Endothelial cell of umbilical vein (primary cell): ENCODE measurements at regions of chr17 and their contacts with region 1.

Region 1: DNA sequence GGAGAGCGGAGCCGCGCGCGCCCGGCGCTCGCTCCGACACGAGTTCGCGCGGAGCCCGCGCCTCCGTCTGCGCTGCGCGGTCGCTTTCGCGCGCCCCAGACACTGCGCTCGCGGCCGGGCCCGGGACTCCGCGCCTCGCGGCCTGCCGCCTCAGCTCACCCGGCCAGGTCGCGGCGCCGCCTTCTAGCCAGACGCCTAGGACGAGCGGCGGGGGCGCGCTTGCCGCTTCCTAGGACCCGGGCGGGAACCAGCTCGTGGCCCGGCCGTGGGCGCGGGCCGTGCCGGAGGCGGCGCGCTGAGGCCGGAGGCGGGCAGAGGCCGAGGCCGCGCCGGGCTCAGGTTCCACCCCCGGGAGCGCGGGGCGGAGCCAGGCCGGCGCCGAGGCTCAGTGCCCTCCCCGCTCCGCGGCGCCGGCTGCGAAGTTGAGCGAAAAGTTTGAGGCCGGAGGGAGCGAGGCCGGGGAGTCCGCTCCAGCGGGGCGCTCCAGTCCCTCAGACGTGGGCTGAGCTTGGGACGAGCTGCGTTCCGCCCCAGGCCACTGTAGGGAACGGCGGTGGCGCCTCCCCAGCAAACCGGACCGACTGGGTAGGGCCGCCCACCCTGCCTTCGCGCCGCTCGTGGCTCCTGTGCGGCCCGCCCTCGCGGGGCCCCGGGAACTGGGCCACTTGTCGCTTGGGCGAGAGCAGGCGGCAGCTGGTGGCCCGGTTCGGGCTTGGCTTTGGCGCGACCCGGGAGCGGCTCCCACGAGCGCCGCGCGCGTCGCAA is at the start of gene SPHK1:
- DNase-seq: peak; percentile 71
- H3K4me3 ChIP-seq: peak within 1 kb of the TSS; percentile 54 to 82 (median 65)
- H3K27ac ChIP-seq: peak within 1 kb of the TSS; percentile 97
- H3K4me1 ChIP-seq: peaks cover 26% of the 10 kb centered on the region
- H3K27me3 ChIP-seq: no peaks in the 10 kb centered on the region
- CTCF ChIP-seq: no peak
- POLR2A ChIP-seq: peak; percentile 93
- total RNA-seq, gene SPHK1: 70.7 and 85.6 TPM in 2 replicates

Region 2: DNA sequence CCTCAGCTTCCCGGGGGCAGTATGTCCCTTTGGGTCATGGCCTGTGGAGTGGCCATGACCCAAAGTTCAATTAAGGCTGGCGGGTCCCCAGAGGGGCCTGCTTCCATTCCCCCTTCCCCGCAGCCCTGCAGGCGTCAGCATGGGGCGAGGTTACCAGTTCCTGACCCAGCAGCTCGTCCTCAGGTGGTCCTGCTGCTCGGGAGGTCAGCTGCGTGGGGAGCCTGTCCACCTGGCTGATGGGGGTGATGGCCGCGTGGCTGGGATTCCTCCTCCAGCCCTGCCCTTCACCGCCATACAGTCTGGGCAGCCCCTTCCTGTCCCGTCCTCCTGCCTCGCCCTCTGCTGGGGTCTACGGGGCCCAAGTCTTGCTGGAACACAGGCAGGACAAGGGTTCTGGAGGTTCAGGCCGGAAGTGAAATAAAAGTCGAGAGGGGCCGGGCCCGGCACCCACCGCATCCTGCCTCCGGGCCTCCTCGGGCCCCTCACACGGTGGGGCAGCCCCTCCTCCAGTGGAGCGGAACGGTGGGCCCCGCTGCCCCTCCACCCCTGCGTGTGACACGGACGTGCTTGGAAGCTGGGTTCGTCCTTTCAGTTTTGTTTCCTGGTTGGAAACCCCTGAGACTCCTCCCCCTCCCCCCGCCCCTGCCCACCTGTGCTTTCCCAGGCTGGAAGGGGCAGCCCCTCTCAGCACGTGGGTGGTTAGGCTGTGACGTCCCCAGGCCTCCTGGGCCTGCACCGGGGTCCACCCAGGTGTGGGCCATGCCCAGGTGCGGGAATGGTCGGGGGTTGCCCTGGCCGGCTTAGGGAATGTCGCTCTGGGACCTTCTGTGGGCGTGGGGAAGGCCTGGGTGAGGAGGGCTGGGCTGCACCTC is 112.5 kb before region 1 on chr17:
- CTCF ChIA-PET with region 1: no interaction called
- POLR2A ChIA-PET with region 1: no interaction called
- dilution Hi-C with region 1: no loop called
- intact Hi-C with region 1: no loop called
- DNase-seq: peak; percentile 21
- H3K4me3 ChIP-seq: no peak overlapping the region
- H3K27ac ChIP-seq: no peak overlapping the region
- H3K4me1 ChIP-seq: peaks cover 14% of the 10 kb centered on the region
- H3K27me3 ChIP-seq: no peaks in the 10 kb centered on the region
- CTCF ChIP-seq: no peak
- POLR2A ChIP-seq: no peak

Region 3: GRCh38 chr17:76307299-76307965 is 77.0 kb before region 1 on chr17:
- CTCF ChIA-PET with region 1: interaction called, 32 read pairs
- POLR2A ChIA-PET with region 1: no interaction called
- dilution Hi-C with region 1: no loop called
- intact Hi-C with region 1: no loop called
- DNase-seq: no peak
- H3K4me3 ChIP-seq: no peak overlapping the region
- H3K27ac ChIP-seq: no peak overlapping the region
- H3K4me1 ChIP-seq: no peaks in the 10 kb centered on the region
- H3K27me3 ChIP-seq: no peaks in the 10 kb centered on the region
- CTCF ChIP-seq: no peak
- POLR2A ChIP-seq: no peak

Region 4: GRCh38 chr17:76337413-76337777 is 47.0 kb before region 1 on chr17:
- CTCF ChIA-PET with region 1: interaction called, 10 read pairs
- POLR2A ChIA-PET with region 1: no interaction called
- dilution Hi-C with region 1: no loop called
- intact Hi-C with region 1: no loop called
- DNase-seq: peak; percentile 30
- H3K4me3 ChIP-seq: no peak overlapping the region
- H3K27ac ChIP-seq: no peak overlapping the region
- H3K4me1 ChIP-seq: no peaks in the 10 kb centered on the region
- H3K27me3 ChIP-seq: no peaks in the 10 kb centered on the region
- CTCF ChIP-seq: no peak
- POLR2A ChIP-seq: no peak

Region 5: DNA sequence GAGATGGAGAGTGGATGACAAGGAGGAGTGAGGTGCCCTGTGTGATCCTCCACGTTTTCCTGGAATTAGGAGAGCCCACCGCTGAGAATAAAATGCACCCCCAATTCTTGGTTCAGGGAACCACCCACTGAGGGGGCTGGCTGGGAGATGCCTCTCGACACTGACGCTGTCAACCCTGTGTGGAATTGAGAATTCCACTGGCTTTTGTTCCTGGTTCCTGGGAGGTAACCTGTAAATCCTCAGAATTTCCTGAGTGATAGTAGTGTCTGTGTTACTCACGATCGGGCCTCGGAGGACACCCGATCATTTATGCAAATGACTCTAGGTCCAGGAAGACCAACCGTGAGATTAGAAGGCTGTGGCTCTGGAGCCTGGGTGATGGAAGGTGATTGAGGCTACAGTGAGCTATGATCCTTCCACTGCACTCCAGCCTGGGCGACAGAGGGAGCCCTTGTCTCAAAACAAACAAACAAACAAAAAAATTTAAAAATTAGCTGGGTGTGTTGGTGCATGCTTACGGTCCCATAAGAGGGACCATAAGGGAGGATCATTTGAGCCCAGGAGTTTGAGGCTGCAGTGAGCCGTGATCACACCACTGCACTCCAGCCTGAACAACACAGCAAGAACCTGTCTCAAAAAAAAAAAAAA is 19.0 kb before region 1 on chr17:
- CTCF ChIA-PET with region 1: interaction called, 106 read pairs
- POLR2A ChIA-PET with region 1: interaction called, 13 read pairs
- dilution Hi-C with region 1: no loop called
- intact Hi-C with region 1: loop called (anchors 1 kb)
- DNase-seq: no peak
- H3K4me3 ChIP-seq: no peak overlapping the region
- H3K27ac ChIP-seq: no peak overlapping the region
- H3K4me1 ChIP-seq: peaks cover 6% of the 10 kb centered on the region
- H3K27me3 ChIP-seq: no peaks in the 10 kb centered on the region
- CTCF ChIP-seq: peak; percentile 30 to 33
- POLR2A ChIP-seq: no peak

Region 6: GRCh38 chr17:76397687-76398487 is 13.5 kb after region 1 on chr17:
- CTCF ChIA-PET with region 1: interaction called, 99 read pairs
- POLR2A ChIA-PET with region 1: no interaction called
- dilution Hi-C with region 1: no loop called
- intact Hi-C with region 1: loop called (anchors 1 kb)
- DNase-seq: peak; percentile 81
- H3K4me3 ChIP-seq: no peak overlapping the region
- H3K27ac ChIP-seq: no peak overlapping the region
- H3K4me1 ChIP-seq: no peaks in the 10 kb centered on the region
- H3K27me3 ChIP-seq: no peaks in the 10 kb centered on the region
- CTCF ChIP-seq: peak; percentile 92 to 93
- POLR2A ChIP-seq: no peak

Region 7: DNA sequence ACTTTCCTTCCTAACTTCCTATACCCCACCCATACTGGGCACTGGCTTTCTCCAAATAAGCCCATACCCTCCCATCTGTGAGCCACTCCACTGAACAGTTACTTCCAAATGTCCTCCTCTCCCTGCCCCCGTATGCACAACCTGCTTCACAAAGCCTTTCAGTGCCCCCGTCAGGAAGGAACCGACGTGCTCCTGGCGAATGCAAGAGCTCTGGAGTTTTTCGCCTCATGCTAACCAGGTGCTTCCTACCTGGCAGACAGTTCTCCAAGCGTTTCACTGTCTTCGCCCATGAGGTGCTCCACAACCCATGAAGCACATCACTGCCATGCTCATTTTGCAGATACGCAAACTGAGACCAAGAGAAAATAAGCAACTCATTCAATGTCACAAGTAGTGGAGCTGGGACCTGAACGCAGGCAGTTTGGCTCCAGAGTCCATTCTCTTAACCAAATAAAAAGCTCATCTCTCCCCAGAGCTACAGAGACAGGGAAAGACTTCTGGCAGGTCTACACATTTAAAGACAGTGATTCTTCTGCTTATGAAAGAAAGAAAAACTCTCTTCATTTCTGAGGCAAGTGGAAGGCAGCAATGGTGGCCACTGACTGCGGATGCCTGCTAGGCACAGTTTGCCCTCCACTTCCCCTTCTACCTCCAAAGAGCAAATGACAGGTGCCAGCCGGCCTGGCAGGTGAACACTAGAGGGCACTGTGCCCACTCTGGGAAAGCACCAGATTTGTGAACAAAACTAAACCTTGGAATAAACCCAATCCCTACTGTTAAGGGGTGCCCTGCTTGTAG is 23.8 kb after region 1 on chr17:
- CTCF ChIA-PET with region 1: no interaction called
- POLR2A ChIA-PET with region 1: no interaction called
- dilution Hi-C with region 1: no loop called
- intact Hi-C with region 1: no loop called
- DNase-seq: peak; percentile 66
- H3K4me3 ChIP-seq: no peak overlapping the region
- H3K27ac ChIP-seq: no peak overlapping the region
- H3K4me1 ChIP-seq: no peaks in the 10 kb centered on the region
- H3K27me3 ChIP-seq: no peaks in the 10 kb centered on the region
- CTCF ChIP-seq: peak; percentile 92
- POLR2A ChIP-seq: no peak